ENCODE measurements at regions of chr19 and their contacts with region 1.

Region 1: DNA sequence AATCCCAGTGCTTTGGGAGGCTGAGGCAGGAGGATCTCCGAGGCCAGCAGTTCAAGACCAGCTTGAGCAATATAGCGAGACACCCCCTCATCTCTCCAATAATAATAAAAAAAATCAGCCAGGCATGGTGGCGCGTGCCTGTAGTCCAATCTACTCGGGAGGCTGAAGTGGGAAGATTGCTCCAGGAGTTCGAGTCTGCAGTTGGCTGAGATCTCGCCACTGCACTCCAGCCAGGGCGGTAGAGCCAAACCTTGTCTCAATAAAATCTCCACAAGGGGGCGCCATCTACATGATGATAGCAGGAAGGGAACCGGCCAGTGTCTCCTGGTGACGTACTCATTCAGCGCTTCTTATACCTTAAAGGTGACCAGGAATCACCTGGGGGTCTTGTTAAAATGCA is 13.6 kb upstream of the C5AR1 start:
- DNase-seq: peak; percentile 91
- H3K4me3 Mint-ChIP-seq: no peak overlapping the region
- H3K27ac Mint-ChIP-seq: no peak overlapping the region
- H3K4me1 Mint-ChIP-seq: peaks cover 2% of the 10 kb centered on the region
- H3K27me3 Mint-ChIP-seq: no peaks in the 10 kb centered on the region
- CTCF ChIP-seq: peak; percentile 86

Region 2: GRCh38 chr19:47391510-47392223 is 95.6 kb after region 1 on chr19:
- CTCF ChIA-PET with region 1: interaction called, 4 read pairs
- intact Hi-C with region 1: loop called (anchors 5 kb)
- DNase-seq: peak; percentile 91
- H3K4me3 Mint-ChIP-seq: no peak overlapping the region
- H3K27ac Mint-ChIP-seq: no peak overlapping the region
- H3K4me1 Mint-ChIP-seq: no peaks in the 10 kb centered on the region
- H3K27me3 Mint-ChIP-seq: peaks cover 63% of the 10 kb centered on the region
- CTCF ChIP-seq: peak; percentile 95

Region 3: GRCh38 chr19:47414469-47414868 is 118.4 kb after region 1 on chr19:
- CTCF ChIA-PET with region 1: no interaction called
- intact Hi-C with region 1: loop called (anchors 5 kb)
- DNase-seq: peak; percentile 82
- H3K4me3 Mint-ChIP-seq: no peak overlapping the region
- H3K27ac Mint-ChIP-seq: no peak overlapping the region
- H3K4me1 Mint-ChIP-seq: peaks cover 17% of the 10 kb centered on the region
- H3K27me3 Mint-ChIP-seq: peaks cover 96% of the 10 kb centered on the region
- CTCF ChIP-seq: peak; percentile 40

Measured in Calu3 (cell line).